ENCODE measurements at regions of chr19 and their contacts with region 1.

Region 1: GRCh38 chr19:38701455-38702063 is 42.7 kb downstream of the CAPN12 start:
- DNase-seq: no peak
- ATAC-seq: no peak

Region 2: GRCh38 chr19:38496603-38497487 is 204.7 kb before region 1 on chr19:
- intact Hi-C with region 1: no loop called
- DNase-seq: no peak
- ATAC-seq: peak; percentile 58 to 70

Region 3: DNA sequence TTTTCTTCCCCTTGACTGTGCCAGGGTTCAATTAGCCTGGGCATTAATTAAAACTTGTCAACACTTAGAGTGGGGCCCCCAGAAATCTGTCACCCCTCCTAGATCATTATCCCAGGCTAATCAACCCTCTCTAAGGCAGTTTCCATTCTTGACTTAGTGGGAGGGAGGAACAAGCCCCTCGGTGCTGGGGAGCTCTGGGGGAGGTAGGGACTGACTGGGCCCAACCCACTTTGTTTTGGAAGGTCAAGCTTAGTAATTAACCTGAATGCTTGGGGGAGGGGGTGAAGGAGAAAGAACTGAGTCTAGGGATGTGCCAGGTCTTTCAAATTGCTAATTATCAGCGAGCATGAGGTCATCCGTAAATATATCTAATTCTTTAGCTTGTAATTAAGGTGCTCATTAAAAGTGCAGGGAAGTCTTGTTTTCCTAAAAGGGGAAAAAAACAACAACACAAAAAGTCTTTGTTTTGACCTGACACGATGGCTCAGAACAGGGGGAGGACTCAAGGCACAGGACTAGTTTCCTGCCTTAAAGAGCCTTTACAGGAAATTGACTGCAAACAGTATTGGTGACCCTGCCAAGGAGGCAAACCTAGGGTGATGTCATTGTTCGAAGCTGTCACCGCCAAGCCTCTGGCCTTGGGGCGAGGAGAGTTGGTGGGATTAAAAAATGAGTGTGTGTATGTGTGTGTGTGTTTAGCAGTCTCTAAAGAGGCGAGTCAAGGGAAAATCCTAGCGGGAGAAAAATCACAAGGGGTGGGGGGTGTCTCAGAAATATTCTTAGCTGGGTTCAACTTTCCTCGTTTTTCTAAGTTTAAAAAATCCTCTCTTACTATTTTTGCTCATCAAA is 34.7 kb before region 1 on chr19:
- intact Hi-C with region 1: loop called in 1 of 2 experiments (anchors 5 kb)
- DNase-seq: peak; percentile 72
- ATAC-seq: peak; percentile 25 to 63

Region 4: GRCh38 chr19:38805180-38805579 is 103.6 kb after region 1 on chr19:
- intact Hi-C with region 1: no loop called
- DNase-seq: no peak
- ATAC-seq: peak in 1 of 2 donors; percentile 31